MCF 10A (cell line): ENCODE measurements at regions of chr5 and their contacts with region 1.

Region 1: DNA sequence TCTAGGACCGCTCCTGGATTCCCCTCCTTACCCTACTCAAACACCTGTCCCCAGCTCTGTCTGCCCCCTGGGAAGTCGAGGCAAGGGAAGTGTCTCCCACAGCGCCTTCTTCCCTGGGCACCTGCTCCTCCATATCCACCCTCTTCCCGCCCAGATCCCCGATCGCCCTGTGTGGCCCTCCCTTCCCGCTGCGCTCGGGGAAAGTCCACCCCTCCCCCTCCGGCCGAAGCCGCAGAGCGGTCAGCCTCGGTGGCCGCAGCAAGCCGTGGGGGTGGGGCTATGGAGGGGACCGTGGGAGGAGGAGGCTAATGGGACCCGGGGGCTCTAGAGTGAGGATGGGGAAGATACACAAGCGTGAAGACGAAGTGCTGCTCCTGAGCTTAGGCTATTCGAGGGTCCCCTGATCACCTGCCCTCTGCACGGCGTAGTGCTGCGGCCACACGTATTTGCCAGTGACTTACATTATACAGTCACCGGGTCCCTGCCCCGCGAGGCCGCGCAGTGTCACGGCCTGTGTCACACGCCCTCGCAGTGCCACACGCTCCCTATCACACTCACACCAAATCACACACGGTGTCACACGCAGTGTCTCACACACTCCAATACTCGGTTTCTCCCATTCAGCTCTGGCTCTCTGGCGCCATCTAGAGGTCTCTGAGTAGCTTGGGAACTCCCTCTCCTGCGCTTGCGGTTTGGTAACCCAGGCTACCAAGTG is 658 bp upstream of the PCDH1 start:
- DNase-seq: peak; percentile 100
- H3K4me3 Mint-ChIP-seq: peak overlapping the region; percentile 80
- H3K27ac Mint-ChIP-seq: no peak overlapping the region
- H3K4me1 Mint-ChIP-seq: peaks cover 30% of the 10 kb centered on the region
- H3K27me3 Mint-ChIP-seq: peaks cover 55% of the 10 kb centered on the region
- CTCF ChIP-seq: peak; percentile 99

Region 2: GRCh38 chr5:141657937-141658545 is 220.8 kb before region 1 on chr5:
- CTCF ChIA-PET with region 1: interaction called, 29 read pairs
- POLR2A ChIA-PET with region 1: no interaction called
- intact Hi-C with region 1: no loop called
- DNase-seq: peak; percentile 79
- H3K4me3 Mint-ChIP-seq: no peak overlapping the region
- H3K27ac Mint-ChIP-seq: no peak overlapping the region
- H3K4me1 Mint-ChIP-seq: peaks cover 7% of the 10 kb centered on the region
- H3K27me3 Mint-ChIP-seq: no peaks in the 10 kb centered on the region
- CTCF ChIP-seq: no peak

Region 3: GRCh38 chr5:141691867-141692532 is 186.9 kb before region 1 on chr5:
- CTCF ChIA-PET with region 1: interaction called, 677 read pairs
- POLR2A ChIA-PET with region 1: interaction called, 68 read pairs
- intact Hi-C with region 1: loop called (anchors 1 kb)
- DNase-seq: peak; percentile 87
- H3K4me3 Mint-ChIP-seq: peak overlapping the region; percentile 62
- H3K27ac Mint-ChIP-seq: peak overlapping the region; percentile 43
- H3K4me1 Mint-ChIP-seq: peaks cover 8% of the 10 kb centered on the region
- H3K27me3 Mint-ChIP-seq: peaks cover 35% of the 10 kb centered on the region
- CTCF ChIP-seq: peak; percentile 99

Region 4: DNA sequence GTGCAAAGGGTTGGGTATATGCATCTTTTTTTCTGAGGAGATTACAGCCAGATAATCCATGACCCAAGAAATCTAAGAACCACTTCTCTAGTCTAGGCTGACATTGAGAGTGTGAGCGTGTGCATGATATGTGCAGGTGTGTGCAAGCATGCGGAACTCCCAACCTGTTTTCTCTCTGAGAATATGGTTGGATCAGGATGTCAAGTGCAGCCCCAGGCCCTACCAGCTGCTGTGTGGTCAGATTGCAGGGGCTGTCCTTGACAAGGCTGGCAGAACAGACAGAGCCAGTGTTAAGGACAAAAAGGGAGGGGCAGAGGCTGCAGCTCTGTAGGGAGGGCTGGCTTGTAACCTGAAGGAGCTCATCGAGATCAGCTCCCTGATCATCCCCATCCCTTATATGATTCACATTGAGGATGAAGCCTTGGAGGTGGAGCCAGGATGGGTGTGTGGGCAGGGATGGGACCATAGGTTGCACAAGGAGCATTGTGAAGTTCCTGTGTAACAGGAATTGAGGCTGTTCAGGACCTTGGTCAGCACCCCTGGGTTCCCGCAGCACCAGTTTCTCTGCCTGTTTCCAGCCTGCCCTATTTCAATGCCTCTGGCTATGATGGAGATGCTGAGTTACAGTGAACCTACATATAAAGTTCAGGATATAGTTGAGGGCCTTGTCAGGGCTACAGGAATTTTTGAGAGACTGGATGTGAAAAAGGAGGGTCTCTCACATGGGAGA is 144.2 kb before region 1 on chr5:
- CTCF ChIA-PET with region 1: no interaction called
- POLR2A ChIA-PET with region 1: no interaction called
- intact Hi-C with region 1: no loop called
- DNase-seq: peak; percentile 81
- H3K4me3 Mint-ChIP-seq: no peak overlapping the region
- H3K27ac Mint-ChIP-seq: no peak overlapping the region
- H3K4me1 Mint-ChIP-seq: no peaks in the 10 kb centered on the region
- H3K27me3 Mint-ChIP-seq: peaks cover 48% of the 10 kb centered on the region
- CTCF ChIP-seq: no peak

Region 5: DNA sequence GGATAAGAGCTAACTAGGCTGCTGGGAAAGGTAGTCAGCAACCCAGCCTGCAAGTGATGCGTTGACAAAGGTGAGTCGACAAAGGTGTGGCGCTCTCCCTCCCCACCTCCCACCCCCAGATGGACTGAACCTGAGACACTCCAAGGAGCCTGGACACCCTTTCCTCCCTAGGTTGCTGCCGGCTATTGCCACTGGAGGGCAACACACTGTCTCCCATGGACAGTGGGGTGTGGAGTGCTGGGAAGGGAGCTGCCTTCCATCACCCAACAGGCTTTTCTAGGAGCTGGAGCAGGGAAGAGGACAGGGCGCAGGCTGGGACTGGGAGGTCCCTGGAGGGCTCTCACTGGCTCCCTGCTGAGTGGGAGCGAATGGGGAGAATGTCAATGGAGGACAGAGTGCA is 121.5 kb before region 1 on chr5:
- CTCF ChIA-PET with region 1: interaction called, 24 read pairs
- POLR2A ChIA-PET with region 1: interaction called, 3 read pairs
- intact Hi-C with region 1: loop called (anchors 1 kb)
- DNase-seq: peak; percentile 71
- H3K4me3 Mint-ChIP-seq: no peak overlapping the region
- H3K27ac Mint-ChIP-seq: no peak overlapping the region
- H3K4me1 Mint-ChIP-seq: no peaks in the 10 kb centered on the region
- H3K27me3 Mint-ChIP-seq: peaks cover 61% of the 10 kb centered on the region
- CTCF ChIP-seq: peak; percentile 49

Region 6: GRCh38 chr5:141849375-141850243 is 29.3 kb before region 1 on chr5:
- CTCF ChIA-PET with region 1: interaction called, 6 read pairs
- POLR2A ChIA-PET with region 1: interaction called, 38 read pairs
- intact Hi-C with region 1: loop called (anchors 2 kb)
- DNase-seq: peak; percentile 88
- H3K4me3 Mint-ChIP-seq: peak overlapping the region; percentile 81
- H3K27ac Mint-ChIP-seq: peak overlapping the region; percentile 75
- H3K4me1 Mint-ChIP-seq: peaks cover 16% of the 10 kb centered on the region
- H3K27me3 Mint-ChIP-seq: no peaks in the 10 kb centered on the region
- CTCF ChIP-seq: no peak

Region 7: GRCh38 chr5:141923448-141924352 is 44.8 kb after region 1 on chr5 and contains the start of gene DELE1:
- CTCF ChIA-PET with region 1: interaction called, 16 read pairs
- POLR2A ChIA-PET with region 1: interaction called, 12 read pairs
- intact Hi-C with region 1: no loop called
- DNase-seq: peak; percentile 98
- H3K4me3 Mint-ChIP-seq: peak within 1 kb of the TSS; percentile 75
- H3K27ac Mint-ChIP-seq: peak within 1 kb of the TSS; percentile 94
- H3K4me1 Mint-ChIP-seq: peaks cover 11% of the 10 kb centered on the region
- H3K27me3 Mint-ChIP-seq: no peaks in the 10 kb centered on the region
- CTCF ChIP-seq: no peak
- total RNA-seq, gene DELE1: 88.1 and 91.3 TPM in 2 replicates